Dendritic cell treated with granulocyte-macrophage colony-stimulating factor and Interleukin-4, amounts not matched to agents 40 ng/mL and 50 ng/mL, for 4 days (primary cell): ENCODE measurements at regions of chr6 and their contacts with region 1.

Region 1: DNA sequence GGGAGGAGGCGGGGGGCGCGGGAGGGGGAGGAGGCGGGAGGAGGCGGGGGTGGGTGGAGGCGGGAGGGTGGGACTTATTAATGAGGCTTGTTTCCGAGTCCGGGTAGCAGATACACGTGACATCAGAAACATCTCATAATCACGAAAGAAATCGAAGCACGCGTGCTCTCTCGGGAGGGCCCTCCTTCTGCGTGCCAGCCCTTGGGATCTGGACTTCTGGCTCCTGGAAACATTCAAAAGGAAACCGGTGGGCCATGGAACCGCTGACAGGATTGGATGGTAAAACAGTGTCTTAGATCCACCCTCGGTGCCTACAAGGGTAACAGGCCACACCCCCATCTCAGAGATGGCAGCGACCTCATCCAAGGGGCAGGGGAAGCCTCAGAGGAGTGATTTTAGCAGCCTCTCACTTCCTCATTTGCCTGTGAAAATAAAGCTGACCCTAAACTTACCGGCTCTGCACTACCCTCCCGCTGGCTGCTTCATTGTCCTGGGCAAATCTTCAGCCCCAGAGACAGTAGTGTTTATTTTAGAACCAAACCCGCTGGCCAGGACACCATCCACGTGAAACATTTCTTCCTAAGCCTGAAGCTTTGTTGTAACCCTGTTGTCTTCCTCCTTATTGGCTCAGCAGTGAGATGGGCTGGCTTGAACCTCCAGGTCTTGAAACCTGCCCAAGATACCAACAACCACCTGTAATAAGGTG is 97.5 kb downstream of the PSMG4 start:
- H3K4me3 Mint-ChIP-seq: peak overlapping the region; percentile 72
- H3K27ac Mint-ChIP-seq: peak overlapping the region; percentile 96
- H3K4me1 Mint-ChIP-seq: peaks cover 43% of the 10 kb centered on the region
- H3K27me3 Mint-ChIP-seq: peaks cover 13% of the 10 kb centered on the region

Region 2: DNA sequence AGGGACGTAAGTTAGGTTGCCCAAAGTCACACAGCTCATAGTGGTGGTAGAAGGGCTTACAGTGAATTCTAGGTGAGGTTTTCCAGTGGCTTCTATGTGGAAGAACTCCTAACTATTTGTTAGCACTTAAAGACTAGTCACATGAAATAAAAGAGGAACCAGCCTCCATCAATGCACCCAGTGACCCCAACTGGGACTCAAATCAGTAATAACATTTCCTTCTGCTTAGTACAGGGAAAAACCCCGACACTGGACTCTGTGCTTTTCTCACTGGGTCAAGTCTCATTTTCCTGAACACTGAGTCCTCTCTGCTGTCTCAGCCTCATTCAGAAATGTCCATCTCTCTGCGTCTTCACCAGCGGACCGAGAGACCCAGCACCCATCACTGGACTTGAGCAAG is 11.4 kb after region 1 on chr6:
- intact Hi-C with region 1: loop called (anchors 1 kb)
- H3K4me3 Mint-ChIP-seq: no peak overlapping the region
- H3K27ac Mint-ChIP-seq: peak overlapping the region; percentile 63
- H3K4me1 Mint-ChIP-seq: peaks cover 36% of the 10 kb centered on the region
- H3K27me3 Mint-ChIP-seq: peaks cover 51% of the 10 kb centered on the region